Cardiac septum (tissue), 1 donor: ENCODE measurements at regions of chr2 and their contacts with region 1.

Region 1: DNA sequence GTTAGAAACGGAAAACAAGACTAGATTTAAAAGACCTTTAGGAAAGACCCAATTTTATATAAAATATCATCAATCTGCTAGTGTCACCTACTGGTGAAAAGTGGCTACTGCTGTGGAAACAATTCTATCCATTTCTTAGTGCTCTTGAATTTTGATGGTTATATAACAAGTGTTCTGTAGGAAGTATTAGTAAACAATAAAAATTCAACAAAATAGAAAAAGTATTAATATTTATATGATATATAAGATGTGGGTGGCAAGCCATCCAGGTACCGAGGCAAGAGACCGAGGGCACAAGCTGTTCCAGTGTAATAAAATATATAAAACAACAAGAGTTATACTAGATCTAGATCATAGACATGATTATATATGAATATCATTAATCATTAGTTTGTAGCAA is 6.2 kb upstream of the TMEM87B start:
- DNase-seq: no peak

Region 2: DNA sequence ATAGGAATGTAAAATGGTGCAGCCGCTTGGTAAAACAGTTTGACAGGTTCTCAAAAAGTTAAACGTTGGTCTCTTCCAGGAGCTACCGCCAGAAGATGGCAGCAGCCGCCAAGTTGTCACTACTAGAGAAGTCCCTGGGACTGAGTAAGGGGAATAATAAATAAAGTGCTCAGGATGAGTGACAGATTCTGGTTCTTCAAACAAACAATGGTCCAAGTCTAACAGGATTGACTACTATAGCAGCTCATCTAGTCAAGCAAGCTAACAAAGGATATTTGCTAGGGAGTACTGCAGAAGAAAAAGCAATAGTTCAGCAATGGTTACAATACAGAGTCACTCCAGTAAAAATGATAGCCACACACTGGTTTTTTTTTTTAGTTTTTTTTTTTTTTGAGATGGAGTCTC is 161.1 kb before region 1 on chr2:
- intact Hi-C with region 1: loop called (anchors 1 kb)
- DNase-seq: no peak

Region 3: GRCh38 chr2:112321375-112322320 is 272.8 kb after region 1 on chr2:
- intact Hi-C with region 1: no loop called
- DNase-seq: no peak

Region 4: GRCh38 chr2:112636231-112636960 is 587.5 kb after region 1 on chr2:
- intact Hi-C with region 1: no loop called
- DNase-seq: no peak